GM12878 (cell line): ENCODE measurements at regions of chr4 and their contacts with region 1.

Region 1: DNA sequence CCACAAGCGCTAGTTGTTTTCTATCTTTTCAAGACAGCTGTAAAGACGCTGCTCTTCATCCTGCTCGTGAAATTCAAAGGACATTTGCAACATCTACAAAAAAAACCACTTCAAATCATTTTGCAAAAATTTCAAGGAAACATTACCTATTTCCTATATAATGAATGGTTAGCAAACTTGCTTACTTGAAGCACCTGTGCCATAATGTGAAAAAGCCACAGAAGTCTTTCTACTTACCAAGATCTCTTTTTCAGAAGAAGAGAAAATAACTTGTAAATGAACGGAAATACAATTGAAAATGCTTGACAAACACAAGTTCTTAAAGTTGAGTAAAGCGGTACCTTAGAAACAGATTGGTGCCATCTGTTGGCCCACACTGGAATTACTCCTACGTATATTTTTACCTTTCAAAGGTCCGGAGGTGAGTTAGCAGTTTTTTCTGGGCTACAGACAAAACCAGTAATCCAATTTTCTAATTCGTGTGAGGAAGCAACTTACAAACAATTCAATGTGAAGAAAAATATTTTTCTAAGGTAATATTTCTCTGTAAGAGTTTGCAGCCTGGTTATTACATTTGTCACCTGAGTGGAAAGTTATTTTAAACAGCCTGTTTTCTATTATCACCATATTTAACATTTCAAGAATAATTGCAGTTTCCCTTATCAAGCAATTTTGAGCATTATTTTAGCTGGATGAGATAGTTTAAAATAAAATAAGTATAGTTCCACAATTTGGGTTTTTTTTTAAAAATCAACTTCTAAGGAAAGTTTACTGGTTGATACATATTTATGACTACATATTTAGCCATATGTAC is at the start of gene TLR6:
- DNase-seq: peak; percentile 91
- ATAC-seq: peak; percentile 59
- H3K4me3 ChIP-seq: peak within 1 kb of the TSS; percentile 75
- H3K27ac ChIP-seq: peak within 1 kb of the TSS; percentile 96
- H3K4me1 ChIP-seq: peaks cover 14% of the 10 kb centered on the region
- H3K27me3 ChIP-seq: no peaks in the 10 kb centered on the region
- CTCF ChIP-seq: peak; percentile 62 to 79 (median 77)
- EP300 ChIP-seq: peak in 1 of 2 experiments; percentile 51; a peak in 1 of 4 replicates
- POLR2A ChIP-seq: no peak
- RAD21 ChIP-seq: peak; percentile 88
- polyA plus RNA-seq, gene TLR6: 1.1 to 1.5 TPM

Region 2: GRCh38 chr4:38319456-38320342 is 537.0 kb before region 1 on chr4:
- CTCF ChIA-PET with region 1: interaction called, 5 read pairs
- POLR2A ChIA-PET with region 1: no interaction called
- RAD21 ChIA-PET with region 1: no interaction called
- SMC1A ChIA-PET with region 1: no interaction called
- in situ Hi-C with region 1: loop called (anchors 25 kb)
- intact Hi-C with region 1: loop called (anchors 2 kb)
- DNase-seq: peak; percentile 74
- ATAC-seq: peak; percentile 80
- H3K4me3 ChIP-seq: peak overlapping the region; percentile 47
- H3K27ac ChIP-seq: peak overlapping the region; percentile 91
- H3K4me1 ChIP-seq: peaks cover 27% of the 10 kb centered on the region
- H3K27me3 ChIP-seq: no peaks in the 10 kb centered on the region
- CTCF ChIP-seq: peak; percentile 93 to 99 (median 99)
- EP300 ChIP-seq: no peak
- POLR2A ChIP-seq: no peak
- RAD21 ChIP-seq: peak; percentile 99

Region 3: DNA sequence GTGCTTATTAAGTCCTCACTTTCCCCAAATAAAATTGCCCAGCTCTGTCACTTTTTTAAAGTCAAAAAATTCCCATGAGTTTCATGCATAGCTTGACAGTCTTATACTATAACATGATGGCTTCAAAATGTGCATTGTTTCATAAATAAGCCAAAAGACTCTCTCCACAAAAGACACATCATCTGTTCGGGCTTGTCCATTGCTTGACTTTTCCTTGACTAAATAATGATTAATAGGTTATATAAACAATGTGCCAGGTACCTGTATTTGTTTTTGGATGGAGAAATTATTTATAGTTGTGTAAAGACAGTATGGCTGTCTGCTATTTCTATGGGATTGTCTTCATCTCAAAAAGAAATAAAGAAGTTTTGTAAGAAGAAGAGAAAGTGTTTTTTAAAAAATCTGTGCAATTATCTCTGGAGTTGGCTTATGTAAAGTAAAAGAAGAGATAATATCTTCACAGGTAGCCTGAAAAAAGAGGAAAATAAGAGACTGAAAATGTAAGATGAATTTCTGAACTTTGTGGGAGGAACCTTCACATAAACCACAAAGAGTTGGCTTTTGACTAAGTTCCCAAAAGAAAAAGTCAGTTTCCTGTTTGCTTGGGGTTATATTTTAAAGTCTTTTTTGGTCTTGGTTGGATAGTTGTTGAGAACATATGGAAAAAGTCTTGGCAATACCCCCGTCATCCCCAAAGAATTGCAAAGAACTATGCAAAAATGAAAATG is 521.8 kb before region 1 on chr4:
- CTCF ChIA-PET with region 1: no interaction called
- POLR2A ChIA-PET with region 1: no interaction called
- RAD21 ChIA-PET with region 1: no interaction called
- SMC1A ChIA-PET with region 1: no interaction called
- in situ Hi-C with region 1: no loop called
- intact Hi-C with region 1: no loop called
- DNase-seq: no peak
- ATAC-seq: no peak
- H3K4me3 ChIP-seq: 0 out of 2 replicates have a peak overlapping the region, but pooled peaks have one; percentile 10
- H3K27ac ChIP-seq: peak overlapping the region; percentile 38
- H3K4me1 ChIP-seq: peaks cover 23% of the 10 kb centered on the region
- H3K27me3 ChIP-seq: no peaks in the 10 kb centered on the region
- CTCF ChIP-seq: no peak
- EP300 ChIP-seq: no peak
- POLR2A ChIP-seq: no peak
- RAD21 ChIP-seq: no peak

Region 4: DNA sequence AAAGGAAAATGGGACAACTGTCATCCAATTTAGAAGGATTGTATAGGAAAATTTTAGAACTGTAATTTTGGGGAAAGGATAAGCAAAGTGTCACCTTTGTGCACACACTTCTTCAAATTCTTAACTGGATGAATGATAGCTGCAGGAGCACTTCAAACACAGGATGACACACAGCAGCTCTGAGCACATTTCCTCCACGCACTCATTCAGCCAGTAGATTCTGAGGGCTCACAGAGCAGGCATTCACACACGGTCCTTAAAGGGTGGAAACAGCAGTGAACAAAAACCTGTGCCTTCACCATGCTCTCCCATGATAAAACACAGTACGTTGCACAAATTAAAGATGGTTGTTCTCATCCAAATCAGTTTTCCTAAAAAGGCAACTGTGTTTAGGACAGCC is 231.2 kb before region 1 on chr4:
- CTCF ChIA-PET with region 1: no interaction called
- POLR2A ChIA-PET with region 1: no interaction called
- RAD21 ChIA-PET with region 1: no interaction called
- SMC1A ChIA-PET with region 1: no interaction called
- in situ Hi-C with region 1: no loop called
- intact Hi-C with region 1: no loop called
- DNase-seq: no peak
- ATAC-seq: no peak
- H3K4me3 ChIP-seq: no peak overlapping the region
- H3K27ac ChIP-seq: no peak overlapping the region
- H3K4me1 ChIP-seq: no peaks in the 10 kb centered on the region
- H3K27me3 ChIP-seq: no peaks in the 10 kb centered on the region
- CTCF ChIP-seq: no peak
- EP300 ChIP-seq: no peak
- POLR2A ChIP-seq: no peak
- RAD21 ChIP-seq: no peak

Region 5: DNA sequence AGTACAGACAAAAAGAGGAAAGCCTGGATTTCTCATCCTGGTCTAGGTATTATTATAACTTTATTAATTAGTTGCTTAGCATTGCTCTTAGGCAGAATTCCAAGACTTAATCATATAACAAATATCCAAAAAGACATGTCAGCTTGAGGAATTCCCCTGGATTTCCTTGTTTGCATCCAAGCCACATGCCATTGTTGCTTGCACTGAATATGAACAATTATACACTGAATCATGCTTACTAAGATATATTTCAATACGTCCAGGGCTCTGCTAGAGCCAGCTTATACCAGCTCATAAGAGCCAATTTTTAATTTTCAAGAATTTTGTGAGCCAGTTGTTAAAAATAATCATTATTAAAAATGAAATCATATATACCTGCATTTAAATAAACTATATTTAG is 68.4 kb before region 1 on chr4:
- CTCF ChIA-PET with region 1: interaction called, 90 read pairs
- POLR2A ChIA-PET with region 1: no interaction called
- RAD21 ChIA-PET with region 1: interaction called, 3 read pairs
- SMC1A ChIA-PET with region 1: interaction called, 81 read pairs
- in situ Hi-C with region 1: no loop called
- intact Hi-C with region 1: loop called (anchors 1 kb)
- DNase-seq: no peak
- ATAC-seq: no peak
- H3K4me3 ChIP-seq: no peak overlapping the region
- H3K27ac ChIP-seq: no peak overlapping the region
- H3K4me1 ChIP-seq: peaks cover 22% of the 10 kb centered on the region
- H3K27me3 ChIP-seq: no peaks in the 10 kb centered on the region
- CTCF ChIP-seq: no peak
- EP300 ChIP-seq: no peak
- POLR2A ChIP-seq: no peak
- RAD21 ChIP-seq: no peak

Region 6: DNA sequence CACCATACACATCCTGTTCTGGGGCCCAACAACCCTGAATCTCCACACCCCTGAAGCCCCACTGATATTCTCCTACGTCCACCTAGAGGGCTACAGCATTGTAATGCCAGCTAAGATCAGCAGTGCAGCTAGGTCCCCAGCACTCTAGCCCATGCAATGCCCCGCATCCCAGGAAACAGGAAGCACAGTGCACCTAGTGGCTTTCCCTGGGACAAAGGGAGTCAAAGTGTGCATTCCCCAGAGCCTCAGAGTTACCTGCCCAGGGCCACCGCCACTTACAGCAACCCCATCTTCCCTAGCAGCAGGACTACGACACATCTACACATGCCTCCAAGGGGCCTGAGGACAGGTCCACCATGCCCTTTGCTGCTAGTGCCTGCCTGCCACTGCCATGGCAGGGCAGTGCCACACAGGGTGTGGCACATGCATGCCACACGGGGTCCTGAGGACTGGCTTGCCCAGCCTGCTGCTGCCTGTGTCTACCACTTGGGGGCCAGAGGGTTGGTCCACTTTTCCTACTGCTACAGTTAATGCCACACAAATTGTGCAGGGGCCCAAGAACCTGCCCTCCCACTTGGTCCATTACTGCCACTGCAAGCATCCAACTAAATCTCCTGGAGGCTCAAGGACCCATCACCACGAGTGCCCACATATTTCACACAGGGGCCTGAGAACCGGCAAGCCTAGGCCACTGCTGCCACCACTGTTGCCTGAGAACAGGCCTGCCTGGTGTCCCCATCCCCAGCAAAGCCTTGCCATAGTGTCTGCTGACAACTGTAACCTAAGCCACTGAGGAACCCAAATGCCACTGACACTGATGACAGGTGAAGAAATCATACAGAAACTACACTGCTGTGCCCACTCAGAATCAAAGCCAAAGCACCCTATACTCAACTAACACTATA is 23.9 kb before region 1 on chr4:
- CTCF ChIA-PET with region 1: interaction called, 11 read pairs
- POLR2A ChIA-PET with region 1: interaction called, 4 read pairs
- RAD21 ChIA-PET with region 1: interaction called, 3 read pairs
- SMC1A ChIA-PET with region 1: interaction called, 4 read pairs
- in situ Hi-C with region 1: no loop called
- intact Hi-C with region 1: no loop called
- DNase-seq: no peak
- ATAC-seq: peak; percentile 71
- H3K4me3 ChIP-seq: no peak overlapping the region
- H3K27ac ChIP-seq: no peak overlapping the region
- H3K4me1 ChIP-seq: no peaks in the 10 kb centered on the region
- H3K27me3 ChIP-seq: no peaks in the 10 kb centered on the region
- CTCF ChIP-seq: peak in 2 of 3 experiments; percentile 25; a peak in 2 of 6 replicates
- EP300 ChIP-seq: no peak
- POLR2A ChIP-seq: no peak
- RAD21 ChIP-seq: no peak

Region 7: GRCh38 chr4:38872604-38873006 is 15.9 kb after region 1 on chr4:
- CTCF ChIA-PET with region 1: interaction called, 31 read pairs
- POLR2A ChIA-PET with region 1: interaction called, 4 read pairs
- RAD21 ChIA-PET with region 1: interaction called, 7 read pairs
- SMC1A ChIA-PET with region 1: interaction called, 12 read pairs
- in situ Hi-C with region 1: no loop called
- intact Hi-C with region 1: no loop called
- DNase-seq: no peak
- ATAC-seq: no peak
- H3K4me3 ChIP-seq: no peak overlapping the region
- H3K27ac ChIP-seq: no peak overlapping the region
- H3K4me1 ChIP-seq: peaks cover 7% of the 10 kb centered on the region
- H3K27me3 ChIP-seq: no peaks in the 10 kb centered on the region
- CTCF ChIP-seq: no peak
- EP300 ChIP-seq: no peak
- POLR2A ChIP-seq: no peak
- RAD21 ChIP-seq: no peak

Region 8: DNA sequence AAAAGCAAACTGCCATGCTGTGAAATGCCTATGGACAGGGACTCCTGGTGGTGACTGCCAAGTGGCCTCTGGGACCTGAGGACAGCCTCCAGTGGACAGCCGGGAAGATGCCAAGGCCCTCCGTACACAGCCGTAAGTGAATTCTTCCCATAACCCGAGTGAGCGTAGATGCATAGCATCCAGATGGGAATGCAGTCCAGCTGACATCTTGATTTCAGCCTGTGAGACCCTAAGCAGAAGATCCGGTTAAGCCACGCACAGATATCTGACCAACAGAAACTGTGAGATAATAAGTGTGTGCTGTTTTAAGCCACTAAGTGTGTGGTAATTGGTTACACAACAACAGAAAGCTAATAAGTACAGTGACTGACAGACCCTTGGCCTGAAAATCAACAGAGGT is 119.6 kb after region 1 on chr4:
- CTCF ChIA-PET with region 1: no interaction called
- POLR2A ChIA-PET with region 1: no interaction called
- RAD21 ChIA-PET with region 1: no interaction called
- SMC1A ChIA-PET with region 1: no interaction called
- in situ Hi-C with region 1: no loop called
- intact Hi-C with region 1: no loop called
- DNase-seq: no peak
- ATAC-seq: no peak
- H3K4me3 ChIP-seq: no peak overlapping the region
- H3K27ac ChIP-seq: no peak overlapping the region
- H3K4me1 ChIP-seq: peaks cover under 1% of the 10 kb centered on the region; the same call in 1 of the 2 replicates
- H3K27me3 ChIP-seq: no peaks in the 10 kb centered on the region
- CTCF ChIP-seq: no peak
- EP300 ChIP-seq: no peak
- POLR2A ChIP-seq: no peak
- RAD21 ChIP-seq: no peak

Region 9: GRCh38 chr4:39004758-39005157 is 148.0 kb after region 1 on chr4:
- CTCF ChIA-PET with region 1: no interaction called
- POLR2A ChIA-PET with region 1: no interaction called
- RAD21 ChIA-PET with region 1: no interaction called
- SMC1A ChIA-PET with region 1: no interaction called
- in situ Hi-C with region 1: no loop called
- intact Hi-C with region 1: no loop called
- DNase-seq: no peak
- ATAC-seq: no peak
- H3K4me3 ChIP-seq: no peak overlapping the region
- H3K27ac ChIP-seq: no peak overlapping the region
- H3K4me1 ChIP-seq: no peaks in the 10 kb centered on the region
- H3K27me3 ChIP-seq: no peaks in the 10 kb centered on the region
- CTCF ChIP-seq: no peak
- EP300 ChIP-seq: no peak
- POLR2A ChIP-seq: no peak
- RAD21 ChIP-seq: no peak

Region 10: DNA sequence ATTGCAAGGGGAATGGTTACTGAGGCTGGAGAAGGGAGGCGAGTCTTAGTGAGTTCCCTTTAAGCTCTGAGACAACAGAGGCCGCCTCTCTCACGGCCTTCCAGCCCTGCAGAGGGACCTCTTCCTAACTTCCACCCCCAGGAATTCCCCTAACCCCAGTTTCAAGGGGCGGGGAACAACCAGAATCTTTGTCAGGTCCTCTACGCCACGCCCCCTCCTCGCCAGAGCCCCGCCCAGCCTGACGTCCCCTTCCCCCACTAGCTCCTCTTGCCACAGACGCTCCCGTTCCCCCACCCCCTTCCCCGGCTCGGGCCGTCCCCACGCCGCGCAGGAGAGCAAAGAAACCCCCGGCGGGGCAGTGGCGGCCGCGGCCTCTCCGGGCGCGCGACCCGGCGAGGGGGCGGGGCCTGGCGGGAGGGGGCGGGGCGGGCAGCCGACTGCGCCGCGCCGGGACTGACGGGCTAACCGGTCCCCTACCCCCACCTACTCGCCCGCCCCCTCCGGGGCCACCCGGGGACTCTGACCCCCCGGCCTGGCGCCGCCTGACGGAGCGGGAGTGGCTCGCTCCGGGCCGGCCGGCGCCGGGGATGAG is 187.7 kb after region 1 on chr4:
- CTCF ChIA-PET with region 1: interaction called, 11 read pairs
- POLR2A ChIA-PET with region 1: no interaction called
- RAD21 ChIA-PET with region 1: no interaction called
- SMC1A ChIA-PET with region 1: interaction called, 3 read pairs
- in situ Hi-C with region 1: no loop called
- intact Hi-C with region 1: no loop called
- DNase-seq: peak; percentile 90
- ATAC-seq: peak; percentile 83
- H3K4me3 ChIP-seq: peak overlapping the region; percentile 83
- H3K27ac ChIP-seq: peak overlapping the region; percentile 81
- H3K4me1 ChIP-seq: peaks cover 14% of the 10 kb centered on the region
- H3K27me3 ChIP-seq: no peaks in the 10 kb centered on the region
- CTCF ChIP-seq: peak in 1 of 3 experiments; percentile 23; a peak in 1 of 6 replicates
- EP300 ChIP-seq: peak in 1 of 2 experiments; percentile 52; a peak in 1 of 4 replicates
- POLR2A ChIP-seq: peak; percentile 74
- RAD21 ChIP-seq: no peak